ENCODE measurements at regions of chr12 and their contacts with region 1.

Region 1: GRCh38 chr12:65556681-65557437 is 267.4 kb upstream of the HMGA2 start:
- DNase-seq: peak; percentile 56 to 80 (median 70)
- H3K4me3 ChIP-seq: no peak overlapping the region
- H3K27ac ChIP-seq: no peak overlapping the region
- H3K27me3 ChIP-seq: peaks cover 0 to 20% (median 4%) of the 10 kb centered on the region in 45 donors
- CTCF ChIP-seq: peak; percentile 57 to 92 (median 82)

Region 2: DNA sequence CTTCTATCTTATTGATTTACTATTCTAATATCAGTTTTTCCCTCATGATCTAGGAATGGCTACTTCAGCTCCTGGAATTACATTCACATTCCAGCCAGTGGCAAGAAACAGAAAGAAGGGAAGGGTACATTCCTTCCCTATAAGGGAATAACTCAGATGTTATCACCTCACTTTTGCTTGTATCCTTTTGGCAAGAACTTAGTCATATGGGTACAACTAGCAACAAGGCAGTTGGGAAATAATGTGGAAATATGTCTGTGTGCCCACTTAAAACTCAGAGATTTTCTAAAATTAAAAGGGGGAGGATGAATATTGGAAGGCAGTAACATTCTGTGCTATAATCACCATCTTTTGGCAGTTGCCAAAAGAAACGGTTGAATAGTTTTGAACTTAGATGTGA is 192.8 kb before region 1 on chr12:
- intact Hi-C with region 1: no loop called
- DNase-seq: no peak
- H3K4me3 ChIP-seq: no peak overlapping the region
- H3K27ac ChIP-seq: no peak overlapping the region
- H3K27me3 ChIP-seq: no peaks in the 10 kb centered on the region
- CTCF ChIP-seq: no peak

Region 3: DNA sequence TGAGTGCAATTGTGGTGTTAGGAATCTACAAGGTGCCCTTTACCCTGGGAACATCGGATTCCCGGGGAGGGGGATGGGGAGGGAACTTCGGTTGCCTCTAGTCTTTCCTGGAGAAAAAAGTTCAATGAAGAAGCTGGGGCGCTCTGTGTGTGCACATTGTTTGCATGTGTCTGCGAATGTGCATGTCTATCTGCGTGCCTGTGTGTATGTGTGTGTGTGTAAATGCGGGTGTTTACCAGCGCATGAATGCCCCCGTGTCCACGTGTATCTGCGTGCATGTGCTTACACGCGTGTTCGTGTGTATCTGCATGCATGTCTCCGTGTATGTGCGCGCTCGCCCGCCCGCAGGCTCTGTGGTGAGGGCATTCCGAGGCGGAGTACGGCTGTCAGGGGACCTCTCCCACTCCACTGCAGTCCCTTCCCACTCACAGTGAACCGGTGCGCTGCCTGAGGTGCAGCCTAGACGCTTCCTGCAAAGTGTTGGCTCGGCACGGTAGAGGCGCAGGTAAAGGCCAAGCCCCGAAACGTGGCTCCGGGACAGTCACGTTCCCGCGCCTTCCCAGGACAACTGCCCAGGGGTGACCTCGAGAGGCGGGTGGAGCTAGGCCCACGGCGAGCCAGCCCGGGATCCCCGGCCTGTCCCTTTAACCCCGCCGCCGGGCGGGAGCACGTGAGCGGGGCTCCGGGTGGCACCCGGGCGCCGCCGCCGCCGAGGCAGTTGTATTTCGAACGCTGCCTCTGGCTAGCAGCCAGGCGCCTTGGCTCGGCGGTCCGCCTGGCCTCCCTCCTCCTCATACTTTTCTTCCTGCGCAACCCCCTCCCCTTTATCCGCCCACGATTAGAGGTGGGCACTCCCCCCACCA is 266.9 kb after region 1 on chr12:
- intact Hi-C with region 1: no loop called
- DNase-seq: no peak
- H3K4me3 ChIP-seq: peak overlapping the region; percentile 28 to 75 (median 52)
- H3K27ac ChIP-seq: no peak overlapping the region
- H3K27me3 ChIP-seq: peaks cover 3 to 100% (median 70%) of the 10 kb centered on the region in 45 donors
- CTCF ChIP-seq: no peak

Region 4: GRCh38 chr12:66087365-66087943 is 530.6 kb after region 1 on chr12:
- intact Hi-C with region 1: loop called (anchors 5 kb)
- DNase-seq: peak in 8 of 10 donors; percentile 30 to 77 (median 60)
- H3K4me3 ChIP-seq: no peak overlapping the region
- H3K27ac ChIP-seq: no peak overlapping the region
- H3K27me3 ChIP-seq: peaks cover 0 to 8% (median 0%) of the 10 kb centered on the region in 45 donors
- CTCF ChIP-seq: peak; percentile 48 to 91 (median 76)

Measured in dorsolateral prefrontal cortex (tissue), 120 donors.